HepG2 (cell line): ENCODE measurements at regions of chr14 and their contacts with region 1.

Region 1: GRCh38 chr14:94517641-94518257 is 8.5 kb upstream of the SERPINA12 start:
- DNase-seq: peak; percentile 77
- ATAC-seq: peak; percentile 9; the same call in 2 of the 3 replicates
- H3K4me3 ChIP-seq: peak overlapping the region in 1 of 3 experiments; percentile 14; a peak in 1 of 6 replicates
- H3K27ac ChIP-seq: peak overlapping the region; percentile 44
- H3K4me1 ChIP-seq: peaks cover 92% of the 10 kb centered on the region
- H3K27me3 ChIP-seq: no peaks in the 10 kb centered on the region
- CTCF ChIP-seq: no peak
- EP300 ChIP-seq: peak in 1 of 2 experiments; percentile 80; a peak in 2 of 4 replicates
- POLR2A ChIP-seq: no peak
- RAD21 ChIP-seq: no peak

Region 2: DNA sequence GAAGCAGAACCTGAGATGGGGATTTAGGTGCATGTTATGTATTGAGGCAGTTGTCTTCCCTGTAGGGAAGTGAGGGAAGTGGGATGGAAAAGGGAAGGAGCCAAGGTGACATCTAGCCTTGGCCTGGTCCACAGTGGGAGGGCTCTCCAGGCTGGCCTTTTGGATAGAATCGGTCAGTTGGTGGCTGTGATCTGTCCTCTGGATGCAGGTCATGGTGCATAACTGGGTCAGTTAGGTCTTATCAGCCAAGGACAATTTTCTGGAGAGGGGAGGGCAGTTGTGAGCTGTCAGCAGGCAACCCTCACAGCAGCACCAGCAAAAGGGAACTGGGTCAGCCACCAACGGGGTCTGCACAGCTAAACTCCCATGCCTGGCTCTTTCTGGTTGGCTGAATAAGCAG is 18.1 kb before region 1 on chr14:
- CTCF ChIA-PET with region 1: no interaction called
- POLR2A ChIA-PET with region 1: interaction called, 4 read pairs
- in situ Hi-C with region 1: no loop called
- intact Hi-C with region 1: loop called (anchors 2 kb)
- DNase-seq: no peak
- ATAC-seq: peak; percentile 14
- H3K4me3 ChIP-seq: no peak overlapping the region
- H3K27ac ChIP-seq: no peak overlapping the region
- H3K4me1 ChIP-seq: peaks cover 39% of the 10 kb centered on the region
- H3K27me3 ChIP-seq: no peaks in the 10 kb centered on the region
- CTCF ChIP-seq: no peak
- EP300 ChIP-seq: no peak
- POLR2A ChIP-seq: peak in 1 of 2 experiments; percentile 41; a peak in 1 of 4 replicates
- RAD21 ChIP-seq: no peak

Region 3: GRCh38 chr14:94571950-94572349 is 54.2 kb after region 1 on chr14:
- CTCF ChIA-PET with region 1: no interaction called
- POLR2A ChIA-PET with region 1: interaction called, 10 read pairs
- in situ Hi-C with region 1: no loop called
- intact Hi-C with region 1: no loop called
- DNase-seq: peak; percentile 37
- ATAC-seq: peak; percentile 7; the same call in 2 of the 3 replicates
- H3K4me3 ChIP-seq: no peak overlapping the region
- H3K27ac ChIP-seq: peak overlapping the region; percentile 94
- H3K4me1 ChIP-seq: peaks cover 89% of the 10 kb centered on the region
- H3K27me3 ChIP-seq: no peaks in the 10 kb centered on the region
- CTCF ChIP-seq: no peak
- EP300 ChIP-seq: no peak
- POLR2A ChIP-seq: no peak
- RAD21 ChIP-seq: no peak